ENCODE measurements at regions of chr11 and their contacts with region 1.

Region 1: DNA sequence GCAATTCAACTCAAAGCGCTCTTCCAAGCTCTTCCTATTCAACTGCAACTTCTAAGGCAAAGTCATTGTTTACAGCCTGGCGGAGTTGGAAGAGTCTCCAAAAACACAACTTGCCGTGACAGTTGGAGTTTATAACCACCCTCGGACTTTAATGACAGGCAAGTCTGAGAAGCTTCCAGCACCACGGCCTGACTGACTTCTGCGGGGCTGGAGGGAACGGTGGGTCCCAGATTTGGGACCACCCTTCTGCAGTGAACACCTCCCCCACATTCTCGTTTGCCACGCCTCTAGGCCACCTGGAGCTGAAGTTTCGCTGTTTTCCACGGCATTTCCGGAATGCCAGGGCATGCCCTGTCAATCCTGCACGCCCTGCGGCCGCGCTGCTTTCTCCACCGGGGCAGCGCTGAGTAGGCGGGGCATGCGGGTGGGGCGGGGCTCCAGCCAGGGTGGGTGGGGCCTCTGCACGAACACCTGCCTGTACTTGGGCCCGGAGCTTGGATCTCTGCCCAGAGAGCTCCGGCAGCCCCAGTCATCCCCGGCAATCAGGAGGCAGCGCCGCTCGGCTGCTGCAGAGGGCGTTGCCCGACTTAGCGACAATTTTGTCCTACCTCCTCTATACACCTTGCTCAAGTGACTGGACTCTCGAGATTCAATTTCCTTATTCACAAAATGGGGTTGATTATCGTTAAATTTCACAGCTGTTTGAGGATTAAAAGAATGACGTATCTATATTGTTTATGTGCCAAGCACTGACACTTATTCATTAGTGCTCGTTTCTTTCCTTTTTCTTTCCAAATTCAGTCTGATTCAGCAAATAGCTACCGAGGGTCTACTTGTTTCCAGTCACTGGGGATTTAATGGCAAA is 48.7 kb upstream of the BIRC3 start:
- DNase-seq: peak; percentile 54
- ATAC-seq: peak; percentile 100
- H3K4me3 Mint-ChIP-seq: peak overlapping the region; percentile 56
- H3K27ac Mint-ChIP-seq: no peak overlapping the region
- H3K4me1 Mint-ChIP-seq: peaks cover 15% of the 10 kb centered on the region
- H3K27me3 Mint-ChIP-seq: peaks cover 14% of the 10 kb centered on the region
- CTCF ChIP-seq: no peak

Region 2: DNA sequence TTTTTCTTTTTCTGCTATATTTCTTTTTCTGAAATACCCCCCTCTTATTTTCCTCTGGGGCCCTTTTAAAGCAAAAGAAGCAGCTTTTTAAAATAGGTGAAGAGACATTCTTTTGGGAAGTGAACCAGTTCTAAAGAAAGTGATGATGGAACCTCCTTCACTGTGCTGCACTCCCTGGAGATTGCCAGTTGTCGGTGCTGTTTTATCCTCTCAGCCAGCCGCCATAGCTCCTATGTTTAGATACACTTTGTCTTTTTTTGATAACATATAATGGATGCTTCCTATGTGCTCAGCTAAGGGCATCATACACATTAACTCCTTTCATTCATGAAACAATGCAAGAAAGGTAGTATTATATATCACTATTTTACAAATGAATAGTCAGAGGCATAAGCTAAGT is 207.3 kb before region 1 on chr11:
- CTCF ChIA-PET with region 1: no interaction called
- POLR2A ChIA-PET with region 1: no interaction called
- intact Hi-C with region 1: no loop called
- DNase-seq: no peak
- ATAC-seq: no peak
- H3K4me3 Mint-ChIP-seq: no peak overlapping the region
- H3K27ac Mint-ChIP-seq: no peak overlapping the region
- H3K4me1 Mint-ChIP-seq: no peaks in the 10 kb centered on the region
- H3K27me3 Mint-ChIP-seq: peaks cover 3% of the 10 kb centered on the region
- CTCF ChIP-seq: no peak

Region 3: GRCh38 chr11:102109896-102110760 is 158.4 kb before region 1 on chr11 and contains the start of gene YAP1:
- CTCF ChIA-PET with region 1: no interaction called
- POLR2A ChIA-PET with region 1: no interaction called
- intact Hi-C with region 1: loop called (anchors 10 kb)
- DNase-seq: peak; percentile 64
- ATAC-seq: peak; percentile 75
- H3K4me3 Mint-ChIP-seq: peak within 1 kb of the TSS; percentile 96
- H3K27ac Mint-ChIP-seq: peak within 1 kb of the TSS; percentile 72
- H3K4me1 Mint-ChIP-seq: peaks cover 12% of the 10 kb centered on the region
- H3K27me3 Mint-ChIP-seq: peaks cover 41% of the 10 kb centered on the region
- CTCF ChIP-seq: no peak
- total RNA-seq, gene YAP1: not detected in 2 replicates

Region 4: GRCh38 chr11:102135256-102135655 is 133.3 kb before region 1 on chr11:
- CTCF ChIA-PET with region 1: no interaction called
- POLR2A ChIA-PET with region 1: no interaction called
- intact Hi-C with region 1: no loop called
- DNase-seq: no peak
- ATAC-seq: no peak
- H3K4me3 Mint-ChIP-seq: no peak overlapping the region
- H3K27ac Mint-ChIP-seq: no peak overlapping the region
- H3K4me1 Mint-ChIP-seq: no peaks in the 10 kb centered on the region
- H3K27me3 Mint-ChIP-seq: peaks cover 10% of the 10 kb centered on the region
- CTCF ChIP-seq: no peak